Lower lobe of right lung (tissue), 2 donors: ENCODE measurements at regions of chr15 and their contacts with region 1.

Region 1: GRCh38 chr15:78422571-78423340 is 15.3 kb upstream of the IREB2 start:
- DNase-seq: peak; percentile 68
- ATAC-seq: peak; percentile 74 to 91
- H3K4me3 ChIP-seq: no peak overlapping the region
- H3K27ac ChIP-seq: no peak overlapping the region
- H3K4me1 ChIP-seq: no peaks in the 10 kb centered on the region
- H3K27me3 ChIP-seq: no peaks in the 10 kb centered on the region
- CTCF ChIP-seq: peak; percentile 93

Region 2: GRCh38 chr15:78308422-78309032 is 114.2 kb before region 1 on chr15:
- intact Hi-C with region 1: loop called (anchors 10 kb)
- DNase-seq: peak; percentile 76
- ATAC-seq: peak; percentile 77 to 82
- H3K4me3 ChIP-seq: no peak overlapping the region
- H3K27ac ChIP-seq: no peak overlapping the region
- H3K4me1 ChIP-seq: peaks cover 6% of the 10 kb centered on the region
- H3K27me3 ChIP-seq: peaks cover 11% of the 10 kb centered on the region
- CTCF ChIP-seq: peak; percentile 86

Region 3: DNA sequence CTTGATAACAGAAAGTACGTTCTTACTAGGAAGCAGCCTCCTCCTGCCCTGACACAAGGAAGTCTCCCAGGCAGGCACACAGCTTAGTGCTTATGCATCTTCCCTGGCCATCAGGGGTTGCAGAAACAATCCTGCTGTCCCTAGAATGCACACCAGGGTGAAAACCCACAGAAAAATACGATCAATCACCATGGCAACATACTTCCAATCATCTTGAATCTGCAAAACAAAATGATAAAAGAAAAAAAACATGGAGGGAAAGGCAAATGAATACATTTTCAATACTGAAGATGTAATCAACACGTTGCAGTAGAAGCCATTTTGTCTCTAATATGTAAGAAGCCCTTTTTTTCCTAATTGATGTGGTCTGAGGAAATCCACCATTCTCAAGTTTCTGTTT is 173.8 kb after region 1 on chr15:
- intact Hi-C with region 1: no loop called
- DNase-seq: no peak
- ATAC-seq: no peak
- H3K4me3 ChIP-seq: no peak overlapping the region
- H3K27ac ChIP-seq: no peak overlapping the region
- H3K4me1 ChIP-seq: no peaks in the 10 kb centered on the region
- H3K27me3 ChIP-seq: no peaks in the 10 kb centered on the region
- CTCF ChIP-seq: no peak